Panc1 (cell line): ENCODE measurements at regions of chr12 and their contacts with region 1.

Region 1: GRCh38 chr12:71242511-71242910 is 84.7 kb upstream of the TSPAN8 start:
- DNase-seq: no peak
- ATAC-seq: no peak
- H3K4me3 ChIP-seq: no peak overlapping the region
- H3K27ac ChIP-seq: no peak overlapping the region
- H3K4me1 ChIP-seq: no peaks in the 10 kb centered on the region
- H3K27me3 ChIP-seq: no peaks in the 10 kb centered on the region
- CTCF ChIP-seq: no peak

Region 2: GRCh38 chr12:70962226-70962794 is 280.2 kb before region 1 on chr12:
- CTCF ChIA-PET with region 1: no interaction called
- POLR2A ChIA-PET with region 1: no interaction called
- in situ Hi-C with region 1: no loop called
- intact Hi-C with region 1: no loop called
- DNase-seq: no peak
- ATAC-seq: no peak
- H3K4me3 ChIP-seq: no peak overlapping the region
- H3K27ac ChIP-seq: no peak overlapping the region
- H3K4me1 ChIP-seq: no peaks in the 10 kb centered on the region
- H3K27me3 ChIP-seq: no peaks in the 10 kb centered on the region
- CTCF ChIP-seq: no peak

Region 3: DNA sequence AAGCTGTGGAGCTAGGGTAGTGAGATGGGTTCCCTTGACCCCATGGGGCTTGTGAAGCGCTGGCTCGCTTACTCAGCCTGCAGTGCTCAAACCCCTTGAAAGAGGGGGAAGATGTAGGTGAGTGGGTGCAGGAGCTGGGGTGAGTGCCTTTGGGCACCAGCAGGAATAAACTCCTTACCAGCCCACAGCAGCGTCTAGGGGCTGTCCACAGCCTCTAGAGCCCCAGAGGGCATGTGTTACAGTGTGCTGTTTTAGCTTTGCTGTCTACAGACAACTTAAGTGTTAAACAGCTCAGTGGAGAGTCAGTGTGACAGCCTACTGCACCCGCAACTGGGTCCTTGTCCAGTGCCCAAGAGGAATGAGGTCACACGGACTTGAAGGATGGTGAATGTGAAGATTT is 132.7 kb before region 1 on chr12:
- CTCF ChIA-PET with region 1: interaction called, 17 read pairs
- POLR2A ChIA-PET with region 1: no interaction called
- in situ Hi-C with region 1: no loop called
- intact Hi-C with region 1: no loop called
- DNase-seq: no peak
- ATAC-seq: no peak
- H3K4me3 ChIP-seq: no peak overlapping the region
- H3K27ac ChIP-seq: no peak overlapping the region
- H3K4me1 ChIP-seq: no peaks in the 10 kb centered on the region
- H3K27me3 ChIP-seq: no peaks in the 10 kb centered on the region
- CTCF ChIP-seq: no peak